ENCODE measurements at regions of chr5 and their contacts with region 1.

Region 1: GRCh38 chr5:113384782-113385285 is 50.0 kb downstream of the TSSK1B start:
- DNase-seq: no peak
- H3K4me3 ChIP-seq: no peak overlapping the region
- H3K27ac ChIP-seq: no peak overlapping the region
- H3K27me3 ChIP-seq: peaks cover 3% of the 10 kb centered on the region
- CTCF ChIP-seq: no peak

Region 2: DNA sequence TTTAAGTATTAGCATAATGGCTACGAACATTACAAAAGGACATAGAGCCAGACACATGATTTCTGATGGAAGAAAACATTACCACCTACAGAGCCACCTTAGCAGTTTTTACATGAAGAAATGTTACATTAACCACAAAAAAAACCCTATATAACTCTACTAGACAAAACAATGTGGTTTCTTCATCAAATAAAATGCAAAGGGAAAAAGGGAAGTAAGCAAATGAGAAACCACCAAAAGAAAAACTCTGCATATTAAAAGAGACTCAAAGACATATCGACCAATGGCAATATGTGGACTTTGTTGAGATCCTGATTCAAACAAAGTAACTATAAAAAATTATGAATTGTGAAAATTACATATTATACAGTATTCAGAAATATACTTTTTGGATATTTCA is 82.7 kb before region 1 on chr5:
- CTCF ChIA-PET with region 1: no interaction called
- POLR2A ChIA-PET with region 1: no interaction called
- DNase-seq: no peak
- H3K4me3 ChIP-seq: no peak overlapping the region
- H3K27ac ChIP-seq: no peak overlapping the region
- H3K27me3 ChIP-seq: peaks cover 6% of the 10 kb centered on the region
- CTCF ChIP-seq: no peak

Region 3: GRCh38 chr5:113502073-113502472 is 117.2 kb after region 1 on chr5:
- CTCF ChIA-PET with region 1: no interaction called
- POLR2A ChIA-PET with region 1: no interaction called
- DNase-seq: no peak
- H3K4me3 ChIP-seq: no peak overlapping the region
- H3K27ac ChIP-seq: no peak overlapping the region
- H3K27me3 ChIP-seq: no peaks in the 10 kb centered on the region
- CTCF ChIP-seq: no peak

Region 4: GRCh38 chr5:113520429-113520828 is 135.6 kb after region 1 on chr5:
- CTCF ChIA-PET with region 1: interaction called, 12 read pairs
- POLR2A ChIA-PET with region 1: no interaction called
- DNase-seq: no peak
- H3K4me3 ChIP-seq: no peak overlapping the region
- H3K27ac ChIP-seq: no peak overlapping the region
- H3K27me3 ChIP-seq: no peaks in the 10 kb centered on the region
- CTCF ChIP-seq: no peak

Region 5: DNA sequence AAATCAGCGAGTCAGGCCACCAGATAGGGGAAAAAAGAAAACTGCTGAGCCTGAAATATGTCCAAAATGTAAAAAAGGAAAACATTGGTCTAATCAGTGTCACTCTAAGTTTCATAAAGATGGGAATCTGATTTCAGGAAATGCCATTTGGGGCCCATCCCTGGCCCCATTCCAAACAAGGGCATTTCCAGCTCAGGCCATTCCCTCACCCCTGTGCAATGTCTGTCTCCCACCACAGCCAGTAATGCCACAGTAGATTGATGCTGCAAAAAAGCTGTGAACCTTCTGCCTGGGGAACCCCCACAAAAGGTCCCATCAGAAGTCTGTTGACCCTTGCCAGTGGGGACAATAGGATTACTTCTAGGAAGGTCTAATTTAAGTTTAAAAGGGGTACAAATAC is 328.2 kb after region 1 on chr5:
- CTCF ChIA-PET with region 1: no interaction called
- POLR2A ChIA-PET with region 1: no interaction called
- DNase-seq: no peak
- H3K4me3 ChIP-seq: no peak overlapping the region
- H3K27ac ChIP-seq: no peak overlapping the region
- H3K27me3 ChIP-seq: no peaks in the 10 kb centered on the region
- CTCF ChIP-seq: no peak

Measured in AG04450 (cell line).